Lower leg skin (tissue), 4 donors: ENCODE measurements at regions of chr5 and their contacts with region 1.

Region 1: GRCh38 chr5:154384480-154385235 is 61.1 kb upstream of the SAP30L start:
- DNase-seq: no peak
- H3K4me3 ChIP-seq: no peak overlapping the region
- CTCF ChIP-seq: no peak
- POLR2A ChIP-seq: no peak

Region 2: GRCh38 chr5:152549709-152550108 is 1834.9 kb before region 1 on chr5:
- intact Hi-C with region 1: loop called (anchors 5 kb)
- DNase-seq: no peak
- H3K4me3 ChIP-seq: no peak overlapping the region
- CTCF ChIP-seq: no peak
- POLR2A ChIP-seq: no peak

Region 3: DNA sequence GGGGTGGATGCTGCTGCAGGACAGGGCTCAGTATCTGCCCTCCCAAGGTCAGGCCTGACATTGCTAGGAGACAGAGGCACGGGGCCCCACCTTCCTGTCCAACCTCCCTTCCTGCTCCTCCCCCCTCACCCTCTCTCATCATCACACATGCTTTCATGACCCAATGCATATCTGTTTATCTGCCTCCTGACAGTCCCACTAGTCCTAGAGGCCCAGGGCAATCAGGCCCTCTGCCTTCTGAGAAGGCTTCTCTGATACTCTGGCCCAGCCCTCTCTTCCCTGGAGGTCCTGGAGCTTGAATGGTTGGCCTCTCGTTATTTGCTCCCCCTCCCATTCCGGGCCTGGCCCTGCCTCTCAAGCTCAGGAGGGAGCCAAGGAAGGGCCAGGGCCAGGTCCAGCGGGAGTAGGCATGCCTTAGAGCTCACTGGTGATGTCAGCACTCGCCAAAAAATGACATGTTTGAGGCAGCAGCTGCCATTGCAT is 29.5 kb before region 1 on chr5:
- intact Hi-C with region 1: no loop called
- DNase-seq: peak in 1 of 2 donors; percentile 54
- H3K4me3 ChIP-seq: no peak overlapping the region
- CTCF ChIP-seq: no peak
- POLR2A ChIP-seq: no peak